Activated B cell treated with CpG ODN at 0.5 μM for 24 hours (primary cell): ENCODE measurements at regions of chr2 and their contacts with region 1.

Region 1: GRCh38 chr2:25497918-25498407 is 156.2 kb upstream of the DNMT3A start:
- DNase-seq: no peak
- ATAC-seq: peak; percentile 78
- H3K4me3 Mint-ChIP-seq: peak overlapping the region; percentile 39
- H3K27ac Mint-ChIP-seq: peak overlapping the region; percentile 83
- H3K4me1 Mint-ChIP-seq: peaks cover 23% of the 10 kb centered on the region
- H3K27me3 Mint-ChIP-seq: no peaks in the 10 kb centered on the region
- CTCF ChIP-seq: no peak

Region 2: DNA sequence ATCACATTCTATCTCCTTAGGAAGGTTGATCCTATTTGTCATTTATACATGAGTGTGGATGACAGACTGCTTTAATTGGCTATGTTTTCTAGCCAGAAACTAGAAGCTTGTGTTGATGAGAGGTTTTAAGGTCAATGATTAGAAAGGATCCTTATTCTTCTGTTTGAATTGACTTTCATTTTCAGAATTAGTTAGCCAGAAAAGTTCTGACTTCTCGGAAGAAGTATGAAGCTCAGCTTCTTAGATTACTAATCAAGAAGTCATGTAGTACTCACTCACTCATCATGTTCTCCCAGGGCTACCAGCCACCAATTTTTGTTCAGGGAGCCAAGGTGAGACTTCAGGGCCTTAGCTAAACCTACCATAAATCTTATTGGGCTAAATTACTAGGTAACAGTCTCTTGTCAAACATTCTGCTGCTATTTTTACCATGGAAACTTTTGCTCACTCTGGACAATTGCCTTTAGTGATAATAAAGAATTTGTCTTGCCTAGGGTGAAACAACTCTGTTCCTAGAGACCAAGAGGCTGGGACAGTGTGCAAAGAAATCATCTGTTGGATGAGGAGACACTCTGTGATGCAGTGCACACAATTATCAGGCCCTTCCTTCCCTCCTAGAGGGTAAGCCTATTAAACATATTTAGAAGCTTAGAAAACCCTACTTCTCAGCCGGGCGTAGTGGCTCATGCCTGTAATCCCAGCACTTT is 44.6 kb before region 1 on chr2:
- CTCF ChIA-PET with region 1: no interaction called
- POLR2A ChIA-PET with region 1: no interaction called
- intact Hi-C with region 1: loop called (anchors 5 kb)
- DNase-seq: no peak
- ATAC-seq: peak; percentile 85
- H3K4me3 Mint-ChIP-seq: peak overlapping the region; percentile 44
- H3K27ac Mint-ChIP-seq: peak overlapping the region; percentile 82
- H3K4me1 Mint-ChIP-seq: peaks cover 39% of the 10 kb centered on the region
- H3K27me3 Mint-ChIP-seq: no peaks in the 10 kb centered on the region
- CTCF ChIP-seq: no peak

Region 3: GRCh38 chr2:25473758-25474340 is 24.1 kb before region 1 on chr2:
- CTCF ChIA-PET with region 1: no interaction called
- POLR2A ChIA-PET with region 1: no interaction called
- intact Hi-C with region 1: no loop called
- DNase-seq: no peak
- ATAC-seq: no peak
- H3K4me3 Mint-ChIP-seq: no peak overlapping the region
- H3K27ac Mint-ChIP-seq: no peak overlapping the region
- H3K4me1 Mint-ChIP-seq: no peaks in the 10 kb centered on the region
- H3K27me3 Mint-ChIP-seq: no peaks in the 10 kb centered on the region
- CTCF ChIP-seq: no peak

Region 4: GRCh38 chr2:25514043-25514637 is 16.2 kb after region 1 on chr2:
- CTCF ChIA-PET with region 1: no interaction called
- POLR2A ChIA-PET with region 1: interaction called, 12 read pairs
- intact Hi-C with region 1: no loop called
- DNase-seq: no peak
- ATAC-seq: no peak
- H3K4me3 Mint-ChIP-seq: peak overlapping the region; percentile 11
- H3K27ac Mint-ChIP-seq: peak overlapping the region; percentile 59
- H3K4me1 Mint-ChIP-seq: peaks cover 37% of the 10 kb centered on the region
- H3K27me3 Mint-ChIP-seq: no peaks in the 10 kb centered on the region
- CTCF ChIP-seq: no peak